Transverse colon (tissue), 4 donors: ENCODE measurements at regions of chr20 and their contacts with region 1.

Region 1: GRCh38 chr20:18632196-18633009 is 44.5 kb downstream of the DTD1 start:
- DNase-seq: peak; percentile 46
- H3K4me3 ChIP-seq: no peak overlapping the region
- H3K27ac ChIP-seq: no peak overlapping the region
- H3K4me1 ChIP-seq: no peaks in the 10 kb centered on the region
- H3K27me3 ChIP-seq: no peaks in the 10 kb centered on the region
- CTCF ChIP-seq: peak; percentile 83 to 88 (median 86)
- EP300 ChIP-seq: no peak
- POLR2A ChIP-seq: no peak

Region 2: GRCh38 chr20:19583532-19584175 is 951.3 kb after region 1 on chr20:
- in situ Hi-C with region 1: loop called in 1 of 4 experiments (anchors 25 kb)
- intact Hi-C with region 1: no loop called
- DNase-seq: peak; percentile 70
- H3K4me3 ChIP-seq: no peak overlapping the region
- H3K27ac ChIP-seq: no peak overlapping the region
- H3K4me1 ChIP-seq: no peaks in the 10 kb centered on the region
- H3K27me3 ChIP-seq: no peaks in the 10 kb centered on the region
- CTCF ChIP-seq: peak; percentile 68 to 84 (median 78)
- EP300 ChIP-seq: no peak
- POLR2A ChIP-seq: no peak

Region 3: GRCh38 chr20:19644085-19644484 is 1011.7 kb after region 1 on chr20:
- in situ Hi-C with region 1: loop called in 1 of 4 experiments (anchors 10 kb)
- intact Hi-C with region 1: no loop called
- DNase-seq: no peak
- H3K4me3 ChIP-seq: no peak overlapping the region
- H3K27ac ChIP-seq: no peak overlapping the region
- H3K4me1 ChIP-seq: no peaks in the 10 kb centered on the region
- H3K27me3 ChIP-seq: no peaks in the 10 kb centered on the region
- CTCF ChIP-seq: no peak
- EP300 ChIP-seq: no peak
- POLR2A ChIP-seq: no peak